ENCODE measurements at regions of chr9 and their contacts with region 1.

Region 1: GRCh38 chr9:35116898-35117551 is 1.4 kb upstream of the ATOSB start:
- DNase-seq: peak; percentile 83
- H3K4me3 Mint-ChIP-seq: peak overlapping the region; percentile 94
- H3K27ac Mint-ChIP-seq: peak overlapping the region; percentile 93
- H3K4me1 Mint-ChIP-seq: peaks cover 45% of the 10 kb centered on the region
- H3K27me3 Mint-ChIP-seq: peaks cover 4% of the 10 kb centered on the region

Region 2: DNA sequence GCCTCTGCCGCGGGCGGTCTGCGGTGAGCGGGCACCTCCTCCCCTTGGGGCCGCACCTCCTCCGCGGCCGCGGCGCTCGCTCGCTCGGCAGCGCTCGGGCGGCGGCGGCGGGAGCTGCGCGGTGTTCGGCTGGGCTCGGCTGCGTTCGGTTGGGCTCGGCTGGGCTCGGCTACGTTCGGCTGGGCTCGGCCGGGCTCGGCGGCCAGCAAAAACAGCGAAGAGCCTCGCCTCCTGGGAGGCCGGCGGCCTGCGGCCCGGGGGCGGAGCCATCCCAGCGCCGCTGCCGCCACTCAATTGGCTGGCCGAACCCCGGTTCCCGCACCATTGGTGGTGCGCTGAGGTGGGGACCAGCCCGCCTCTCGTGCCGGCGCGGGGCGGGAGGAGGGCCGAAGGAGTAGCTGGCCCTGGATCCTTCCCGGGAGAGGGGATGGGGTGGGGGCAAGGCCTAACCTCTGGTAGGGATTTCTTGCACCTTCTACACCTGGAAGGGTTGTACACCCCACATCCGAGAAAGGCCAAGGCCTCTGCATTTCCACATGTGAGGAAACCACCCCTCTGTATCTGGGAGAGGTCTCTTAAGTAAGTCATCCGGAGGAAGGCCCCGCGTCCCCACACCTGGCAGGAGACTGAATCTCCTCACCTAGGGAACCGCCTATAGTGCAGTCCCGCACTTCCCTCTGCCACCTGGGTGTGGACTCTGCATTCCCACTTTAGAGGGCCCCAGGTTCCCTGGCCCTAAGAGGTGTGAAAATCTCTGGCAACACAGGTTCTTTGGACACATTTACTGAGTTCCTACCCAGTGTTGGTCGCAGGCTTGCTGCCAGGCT is 593.8 kb before region 1 on chr9 and contains the start of gene ENHO:
- intact Hi-C with region 1: loop called (anchors 10 kb)
- DNase-seq: peak; percentile 91
- H3K4me3 Mint-ChIP-seq: peak within 1 kb of the TSS; percentile 73
- H3K27ac Mint-ChIP-seq: peak within 1 kb of the TSS; percentile 75
- H3K4me1 Mint-ChIP-seq: peaks cover 13% of the 10 kb centered on the region
- H3K27me3 Mint-ChIP-seq: peaks cover 49% of the 10 kb centered on the region
- total RNA-seq, gene ENHO: not detected in 2 replicates

Region 3: DNA sequence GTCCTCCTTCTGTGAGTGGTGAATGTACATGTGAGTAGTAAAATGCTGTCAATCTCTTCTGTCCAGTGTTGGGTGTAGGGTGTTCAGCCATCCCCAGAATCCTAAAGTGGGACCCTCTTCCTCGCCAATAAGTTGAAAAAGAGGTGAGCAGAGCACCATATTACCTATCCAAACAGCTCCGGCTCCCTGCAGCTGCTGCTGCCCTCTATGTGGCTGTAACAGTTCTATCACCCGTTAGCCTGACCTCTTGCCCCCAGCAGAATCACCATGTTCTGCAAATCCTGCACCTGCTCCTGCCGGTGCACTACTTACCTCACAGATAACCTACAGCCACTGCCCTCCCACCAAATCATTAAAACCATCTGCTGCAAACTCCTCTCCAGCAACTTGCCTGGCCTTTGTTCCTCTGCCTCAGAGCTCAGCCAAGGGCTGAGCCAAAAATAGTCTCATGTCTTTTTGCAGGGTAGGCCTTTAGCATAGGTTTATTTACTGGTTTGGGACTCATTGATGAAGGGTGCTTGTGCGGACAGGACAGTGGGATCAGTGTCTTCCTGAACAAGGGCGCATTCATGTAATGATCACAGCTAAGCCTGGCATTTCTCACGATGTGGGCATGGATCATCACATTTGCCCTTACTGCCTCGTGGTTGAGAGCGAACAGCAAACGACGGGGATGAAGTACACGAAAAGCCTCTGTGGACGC is 357.4 kb before region 1 on chr9:
- intact Hi-C with region 1: no loop called
- DNase-seq: no peak
- H3K4me3 Mint-ChIP-seq: no peak overlapping the region
- H3K27ac Mint-ChIP-seq: no peak overlapping the region
- H3K4me1 Mint-ChIP-seq: no peaks in the 10 kb centered on the region
- H3K27me3 Mint-ChIP-seq: peaks cover 33% of the 10 kb centered on the region

Region 4: GRCh38 chr9:34899535-34900158 is 217.4 kb before region 1 on chr9:
- intact Hi-C with region 1: loop called (anchors 1 kb)
- DNase-seq: peak; percentile 71
- H3K4me3 Mint-ChIP-seq: no peak overlapping the region
- H3K27ac Mint-ChIP-seq: no peak overlapping the region
- H3K4me1 Mint-ChIP-seq: no peaks in the 10 kb centered on the region
- H3K27me3 Mint-ChIP-seq: peaks cover 24% of the 10 kb centered on the region

Region 5: DNA sequence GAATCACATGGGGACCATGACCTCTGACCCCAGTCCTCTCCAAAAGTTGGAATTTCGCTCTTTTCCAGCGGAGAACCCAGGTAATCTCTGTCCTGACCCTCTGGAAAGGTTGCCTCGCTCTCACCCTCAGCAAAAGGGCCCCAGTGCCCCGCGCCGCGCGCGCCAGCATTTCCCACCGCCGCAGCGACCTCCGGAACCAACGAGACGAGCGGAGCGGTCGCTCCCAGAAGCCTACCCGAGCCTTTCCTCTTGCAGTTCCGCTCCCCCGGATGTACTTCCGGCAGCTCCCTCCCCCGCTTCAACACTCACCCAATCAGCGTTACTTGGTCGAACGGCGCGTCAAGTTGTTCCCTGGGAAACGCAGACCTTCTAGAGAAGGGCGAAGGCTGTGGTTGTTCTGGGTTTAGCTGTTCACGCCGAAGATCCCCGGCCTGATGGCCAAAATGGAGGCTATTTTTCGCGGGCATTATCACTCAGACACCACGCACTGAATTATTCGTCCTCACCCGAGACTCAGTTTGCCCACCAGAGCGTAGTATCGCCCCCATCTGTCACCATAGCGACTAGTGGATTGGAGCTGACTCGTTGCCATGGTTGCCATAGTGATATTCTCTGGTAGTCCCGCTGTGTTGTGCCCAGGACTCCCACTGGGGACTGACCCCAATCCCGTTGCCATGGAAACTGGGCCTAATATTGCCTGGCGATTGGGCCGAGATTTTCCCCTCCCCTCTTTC is 13.9 kb before region 1 on chr9 and contains the start of gene STOML2:
- intact Hi-C with region 1: loop called (anchors 1 kb)
- DNase-seq: peak; percentile 89
- H3K4me3 Mint-ChIP-seq: peak within 1 kb of the TSS; percentile 87
- H3K27ac Mint-ChIP-seq: peak within 1 kb of the TSS; percentile 88
- H3K4me1 Mint-ChIP-seq: peaks cover 28% of the 10 kb centered on the region
- H3K27me3 Mint-ChIP-seq: no peaks in the 10 kb centered on the region
- total RNA-seq, gene STOML2: 250 and 261 TPM in 2 replicates

Region 6: GRCh38 chr9:35277628-35278359 is 160.8 kb after region 1 on chr9:
- intact Hi-C with region 1: loop called (anchors 5 kb)
- DNase-seq: no peak
- H3K4me3 Mint-ChIP-seq: no peak overlapping the region
- H3K27ac Mint-ChIP-seq: no peak overlapping the region
- H3K4me1 Mint-ChIP-seq: peaks cover 6% of the 10 kb centered on the region
- H3K27me3 Mint-ChIP-seq: peaks cover 4% of the 10 kb centered on the region

Region 7: GRCh38 chr9:35553670-35554543 is 436.9 kb after region 1 on chr9:
- intact Hi-C with region 1: loop called (anchors 1 kb)
- DNase-seq: peak; percentile 23
- H3K4me3 Mint-ChIP-seq: no peak overlapping the region
- H3K27ac Mint-ChIP-seq: no peak overlapping the region
- H3K4me1 Mint-ChIP-seq: no peaks in the 10 kb centered on the region
- H3K27me3 Mint-ChIP-seq: peaks cover 1% of the 10 kb centered on the region

Region 8: DNA sequence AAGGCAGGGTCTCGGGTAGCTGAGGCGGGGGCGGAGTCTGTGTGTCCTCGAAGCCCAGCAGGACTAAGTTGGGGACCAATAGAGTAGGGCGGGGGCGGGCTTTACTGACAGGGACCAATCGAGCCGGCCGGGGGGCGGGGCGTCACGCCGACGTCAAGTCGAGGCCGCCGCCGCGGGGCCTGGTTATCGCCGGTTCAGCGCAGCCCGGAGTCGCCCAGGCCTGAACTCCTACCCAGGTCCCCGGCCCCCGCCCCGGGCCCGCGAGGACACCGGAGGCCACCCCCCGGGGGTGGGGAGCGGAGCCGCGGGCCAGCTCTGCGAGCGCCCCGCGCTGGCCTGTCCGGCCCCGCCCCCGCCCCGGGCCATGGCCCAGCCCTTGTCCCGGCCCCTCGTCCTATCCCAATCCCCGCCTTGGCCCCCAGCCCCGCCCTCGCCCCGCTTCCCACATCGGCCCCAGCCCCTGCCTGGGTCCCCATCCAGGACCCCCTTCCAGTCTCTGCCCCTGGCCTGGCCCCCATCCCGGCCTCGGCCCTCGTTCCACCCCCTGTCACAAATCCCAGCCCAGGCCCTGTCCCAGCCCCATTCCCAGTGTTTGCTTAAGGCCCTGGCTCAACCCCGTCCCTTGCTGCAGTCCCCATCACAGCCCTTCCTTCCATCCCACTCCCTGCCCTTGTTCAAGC is 712.2 kb after region 1 on chr9 and contains the start of gene TMEM8B:
- intact Hi-C with region 1: loop called (anchors 5 kb)
- DNase-seq: peak; percentile 86
- H3K4me3 Mint-ChIP-seq: peak within 1 kb of the TSS; percentile 91
- H3K27ac Mint-ChIP-seq: peak within 1 kb of the TSS; percentile 89
- H3K4me1 Mint-ChIP-seq: peaks cover 22% of the 10 kb centered on the region
- H3K27me3 Mint-ChIP-seq: peaks cover 3% of the 10 kb centered on the region
- total RNA-seq, gene TMEM8B: 1.7 and 1.9 TPM in 2 replicates